Heart left ventricle (tissue), 16 donors: ENCODE measurements at regions of chr1 and their contacts with region 1.

Region 1: DNA sequence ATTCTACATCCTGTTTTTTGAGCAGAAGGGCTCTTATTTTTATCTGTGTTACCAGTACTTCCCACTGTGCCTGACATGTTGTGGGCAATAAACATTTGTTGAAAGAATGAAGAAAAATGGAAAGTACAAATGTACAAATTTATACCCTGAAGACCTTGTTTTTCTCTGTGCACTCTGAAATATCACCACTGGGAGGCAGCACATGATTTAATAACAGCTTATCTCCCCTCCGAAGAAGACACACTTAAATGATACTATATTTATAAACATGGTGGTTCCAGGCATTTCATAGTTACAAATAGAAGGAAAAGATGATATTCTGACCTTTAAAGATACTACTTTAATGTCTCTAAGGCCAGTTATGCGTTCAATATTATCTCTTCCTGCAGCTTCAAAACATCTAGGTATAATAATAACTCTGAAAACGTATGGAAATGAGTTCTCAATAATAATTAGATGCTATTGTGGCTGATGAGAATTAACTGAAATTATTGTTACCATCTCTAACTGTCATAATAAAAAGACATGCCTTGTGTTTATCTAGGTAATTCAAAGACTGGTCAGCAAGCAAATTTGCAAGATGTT is 12.8 kb downstream of the DYNLT5 start:
- DNase-seq: peak in 2 of 5 donors; percentile 18 to 21
- ATAC-seq: peak in 1 of 4 donors; percentile 52
- H3K4me3 ChIP-seq: no peak overlapping the region
- H3K27ac ChIP-seq: no peak overlapping the region
- H3K4me1 ChIP-seq: peaks cover 0 to 4% (median 0%) of the 10 kb centered on the region in 12 donors
- H3K27me3 ChIP-seq: no peaks in the 10 kb centered on the region
- CTCF ChIP-seq: peak; percentile 62 to 84 (median 78)
- POLR2A ChIP-seq: no peak

Region 2: GRCh38 chr1:66924756-66925557 is 159.9 kb after region 1 on chr1 and contains the starts of genes DNAI4 and MIER1:
- intact Hi-C with region 1: loop called in 3 of 10 experiments (anchors 10 kb)
- DNase-seq: peak; percentile 98 to 99 (median 99)
- ATAC-seq: peak; percentile 96 to 98 (median 98)
- H3K4me3 ChIP-seq: peak within 1 kb of the TSS; percentile 61 to 93 (median 76)
- H3K27ac ChIP-seq: peak within 1 kb of the TSS; percentile 82 to 96 (median 92)
- H3K4me1 ChIP-seq: peaks cover 3 to 40% (median 27%) of the 10 kb centered on the region in 12 donors
- H3K27me3 ChIP-seq: no peaks in the 10 kb centered on the region
- CTCF ChIP-seq: peak in 7 of 12 donors; percentile 9 to 50 (median 27)
- POLR2A ChIP-seq: peak in 1 of 2 donors; percentile 61
- total RNA-seq, gene DNAI4: 4.5 to 18.9 (median 10.5) TPM
- total RNA-seq, gene MIER1: 14.3 to 23.8 (median 19.3) TPM

Region 3: GRCh38 chr1:66996018-66996682 is 231.1 kb after region 1 on chr1:
- intact Hi-C with region 1: loop called in 1 of 10 experiments (anchors 10 kb)
- DNase-seq: peak in 4 of 5 donors; percentile 38 to 57 (median 48)
- ATAC-seq: peak in 3 of 4 donors; percentile 51 to 70 (median 52)
- H3K4me3 ChIP-seq: no peak overlapping the region
- H3K27ac ChIP-seq: no peak overlapping the region
- H3K4me1 ChIP-seq: peaks cover 0 to 9% (median 2%) of the 10 kb centered on the region in 12 donors
- H3K27me3 ChIP-seq: no peaks in the 10 kb centered on the region
- CTCF ChIP-seq: peak; percentile 45 to 83 (median 70)
- POLR2A ChIP-seq: no peak

Region 4: DNA sequence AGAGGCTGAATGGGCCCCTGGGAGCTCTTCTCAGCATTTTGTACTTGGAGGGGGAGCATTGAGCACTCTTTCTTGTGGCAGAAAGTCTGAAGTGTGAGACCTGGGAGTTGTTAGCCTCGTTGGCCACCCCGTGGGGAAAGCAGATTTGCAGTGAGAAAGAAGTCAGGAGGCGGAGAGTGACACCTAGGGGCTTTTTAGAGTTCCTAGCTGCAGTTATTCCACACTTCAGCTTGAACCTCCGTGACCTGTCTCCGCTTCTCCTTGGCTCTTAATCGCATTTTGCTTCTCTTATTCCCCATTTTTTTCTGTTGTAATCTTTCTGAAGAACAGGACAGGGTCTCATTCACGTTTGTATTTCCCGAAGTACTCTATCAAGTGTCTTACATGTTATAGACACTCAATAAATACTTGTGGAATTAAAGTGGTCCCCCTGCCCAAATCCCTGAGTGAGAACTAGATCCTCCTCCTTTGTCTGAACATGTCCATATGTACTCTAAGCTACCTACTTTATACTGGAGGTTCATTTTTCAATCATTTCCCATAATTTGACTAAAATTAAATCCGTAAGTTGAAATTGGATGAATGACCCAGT is 384.2 kb after region 1 on chr1:
- intact Hi-C with region 1: loop called (anchors 1 to 5 kb)
- DNase-seq: peak in 4 of 5 donors; percentile 52 to 62 (median 60)
- ATAC-seq: peak in 3 of 4 donors; percentile 90 to 95 (median 90)
- H3K4me3 ChIP-seq: no peak overlapping the region
- H3K27ac ChIP-seq: no peak overlapping the region
- H3K4me1 ChIP-seq: peaks cover 0 to 9% (median 2%) of the 10 kb centered on the region in 12 donors
- H3K27me3 ChIP-seq: peaks cover 0 to 7% (median 0%) of the 10 kb centered on the region in 9 donors
- CTCF ChIP-seq: peak; percentile 49 to 82 (median 77)
- POLR2A ChIP-seq: no peak

Region 5: GRCh38 chr1:67500413-67500959 is 735.4 kb after region 1 on chr1:
- intact Hi-C with region 1: loop called in 4 of 10 experiments (anchors 5 to 10 kb)
- DNase-seq: peak; percentile 69 to 89 (median 81)
- ATAC-seq: peak; percentile 89 to 98 (median 94)
- H3K4me3 ChIP-seq: no peak overlapping the region
- H3K27ac ChIP-seq: no peak overlapping the region
- H3K4me1 ChIP-seq: peaks cover 0 to 3% (median 0%) of the 10 kb centered on the region in 12 donors
- H3K27me3 ChIP-seq: no peaks in the 10 kb centered on the region
- CTCF ChIP-seq: peak; percentile 94 to 99 (median 98)
- POLR2A ChIP-seq: no peak